ENCODE measurements at regions of chr14 and their contacts with region 1.

Region 1: GRCh38 chr14:78005325-78005724 is 164.8 kb upstream of the NRXN3 start:
- DNase-seq: peak; percentile 18
- H3K4me3 Mint-ChIP-seq: no peak overlapping the region
- H3K27ac Mint-ChIP-seq: no peak overlapping the region
- H3K4me1 Mint-ChIP-seq: peaks cover 19% of the 10 kb centered on the region
- H3K27me3 Mint-ChIP-seq: peaks cover 8% of the 10 kb centered on the region

Region 2: DNA sequence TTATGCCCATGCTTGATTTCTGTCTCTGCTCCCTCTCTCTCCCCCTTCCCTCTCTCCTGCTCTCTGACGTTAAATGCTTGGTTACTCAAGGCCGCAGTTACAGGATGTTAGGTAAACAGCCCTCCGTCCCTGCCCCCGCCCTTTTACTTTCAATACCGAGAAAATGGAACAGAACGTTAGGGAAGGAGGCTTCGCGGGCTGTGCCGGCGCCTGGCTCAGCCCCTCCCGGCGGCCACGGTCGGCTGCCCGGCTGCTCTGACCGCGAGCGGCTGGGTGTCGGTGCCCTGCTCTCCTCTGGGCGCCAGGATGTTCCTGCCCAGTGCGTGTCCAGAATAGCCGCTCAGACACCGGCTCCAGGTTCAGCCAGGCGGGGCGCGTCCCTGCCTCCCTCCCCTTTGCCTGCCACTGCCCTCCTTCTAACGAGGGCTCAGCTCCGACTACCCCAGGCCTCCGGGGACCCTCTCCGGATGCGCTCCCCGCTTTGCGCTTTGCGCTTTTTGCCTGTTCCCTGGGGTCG is 39.3 kb before region 1 on chr14:
- intact Hi-C with region 1: no loop called
- DNase-seq: peak; percentile 51
- H3K4me3 Mint-ChIP-seq: peak overlapping the region; percentile 49
- H3K27ac Mint-ChIP-seq: peak overlapping the region; percentile 43
- H3K4me1 Mint-ChIP-seq: peaks cover 2% of the 10 kb centered on the region
- H3K27me3 Mint-ChIP-seq: peaks cover 28% of the 10 kb centered on the region

Region 3: GRCh38 chr14:78143489-78144145 is 138.3 kb after region 1 on chr14:
- intact Hi-C with region 1: loop called (anchors 1 kb)
- DNase-seq: no peak
- H3K4me3 Mint-ChIP-seq: no peak overlapping the region
- H3K27ac Mint-ChIP-seq: peak overlapping the region; percentile 33
- H3K4me1 Mint-ChIP-seq: no peaks in the 10 kb centered on the region
- H3K27me3 Mint-ChIP-seq: peaks cover 1% of the 10 kb centered on the region

Measured in activated T-helper 2 cell treated with anti-CD3 and anti-CD28 coated beads, Interferon-gamma antibody, Interleukin-2, Interleukin-4, amounts not matched to agents 10 μg/mL and 5 μg/mL and 100 μg/mL, durations not matched to agents 14 hours and 24 hours and 36 hours (primary cell).